ENCODE measurements at regions of chr12 and their contacts with region 1.

Region 1: DNA sequence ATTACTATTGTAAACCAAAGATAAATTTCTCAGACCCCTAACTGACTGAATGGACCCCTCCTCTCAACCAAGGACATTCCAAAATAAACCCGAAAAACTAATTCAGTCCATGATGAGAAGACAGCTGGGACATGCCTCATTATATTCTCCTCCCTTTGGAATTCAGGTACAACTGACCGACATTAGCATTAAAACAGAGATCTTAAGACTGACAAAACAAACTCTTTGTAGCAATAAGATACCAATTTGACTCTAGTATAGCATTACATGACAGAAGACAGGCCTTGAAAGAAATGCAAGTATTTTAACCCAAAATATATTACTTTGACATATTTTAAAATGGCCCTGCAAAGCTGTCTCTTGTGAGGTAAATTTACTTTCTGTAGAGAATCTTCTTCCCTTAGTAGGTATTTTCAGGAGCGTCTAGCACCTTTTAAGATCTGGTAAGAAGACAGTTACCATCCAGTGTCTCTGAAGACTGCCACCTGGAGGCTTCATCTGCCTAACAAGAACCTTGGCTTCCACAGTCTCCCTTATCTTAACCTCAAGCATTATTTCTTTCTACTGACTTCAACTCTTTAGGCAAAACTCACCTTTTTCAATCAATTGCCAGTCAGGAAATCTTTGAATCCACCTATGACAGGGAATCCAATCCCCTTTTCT is 957.5 kb downstream of the SLC6A15 start:
- DNase-seq: peak in 1 of 2 experiments; percentile 5
- H3K4me3 ChIP-seq: no peak overlapping the region
- H3K4me3 Mint-ChIP-seq: no peak overlapping the region
- H3K27ac Mint-ChIP-seq: no peak overlapping the region
- H3K4me1 ChIP-seq: no peaks in the 10 kb centered on the region
- H3K4me1 Mint-ChIP-seq: no peaks in the 10 kb centered on the region
- H3K27me3 ChIP-seq: no peaks in the 10 kb centered on the region
- H3K27me3 Mint-ChIP-seq: no peaks in the 10 kb centered on the region
- CTCF ChIP-seq: peak in 1 of 2 experiments; percentile 27

Region 2: GRCh38 chr12:84502907-84503787 is 548.1 kb after region 1 on chr12:
- CTCF ChIA-PET with region 1: no interaction called
- POLR2A ChIA-PET with region 1: no interaction called
- intact Hi-C with region 1: loop called (anchors 10 kb)
- DNase-seq: peak; percentile 42 to 52
- H3K4me3 ChIP-seq: no peak overlapping the region
- H3K4me3 Mint-ChIP-seq: no peak overlapping the region
- H3K27ac Mint-ChIP-seq: no peak overlapping the region
- H3K4me1 ChIP-seq: no peaks in the 10 kb centered on the region
- H3K4me1 Mint-ChIP-seq: no peaks in the 10 kb centered on the region
- H3K27me3 ChIP-seq: no peaks in the 10 kb centered on the region
- H3K27me3 Mint-ChIP-seq: no peaks in the 10 kb centered on the region
- CTCF ChIP-seq: peak; percentile 66 to 67